ENCODE measurements at regions of chr2 and their contacts with region 1.

Region 1: GRCh38 chr2:25362049-25362433 is 20.3 kb upstream of the DNMT3A start:
- DNase-seq: peak; percentile 96
- ATAC-seq: peak; percentile 98
- H3K4me3 Mint-ChIP-seq: peak overlapping the region; percentile 83
- H3K27ac Mint-ChIP-seq: peak overlapping the region; percentile 93
- H3K4me1 Mint-ChIP-seq: peaks cover 15% of the 10 kb centered on the region
- H3K27me3 Mint-ChIP-seq: no peaks in the 10 kb centered on the region

Region 2: GRCh38 chr2:25276569-25277465 is 85.2 kb before region 1 on chr2:
- CTCF ChIA-PET with region 1: interaction called, 18 read pairs
- DNase-seq: peak; percentile 84
- ATAC-seq: peak; percentile 79
- H3K4me3 Mint-ChIP-seq: peak overlapping the region; percentile 65
- H3K27ac Mint-ChIP-seq: peak overlapping the region; percentile 92
- H3K4me1 Mint-ChIP-seq: peaks cover 70% of the 10 kb centered on the region
- H3K27me3 Mint-ChIP-seq: no peaks in the 10 kb centered on the region

Region 3: GRCh38 chr2:25301453-25302352 is 60.3 kb before region 1 on chr2:
- CTCF ChIA-PET with region 1: interaction called, 22 read pairs
- DNase-seq: peak; percentile 96
- ATAC-seq: peak; percentile 95
- H3K4me3 Mint-ChIP-seq: peak overlapping the region; percentile 10
- H3K27ac Mint-ChIP-seq: peak overlapping the region; percentile 70
- H3K4me1 Mint-ChIP-seq: peaks cover 63% of the 10 kb centered on the region
- H3K27me3 Mint-ChIP-seq: no peaks in the 10 kb centered on the region

Region 4: DNA sequence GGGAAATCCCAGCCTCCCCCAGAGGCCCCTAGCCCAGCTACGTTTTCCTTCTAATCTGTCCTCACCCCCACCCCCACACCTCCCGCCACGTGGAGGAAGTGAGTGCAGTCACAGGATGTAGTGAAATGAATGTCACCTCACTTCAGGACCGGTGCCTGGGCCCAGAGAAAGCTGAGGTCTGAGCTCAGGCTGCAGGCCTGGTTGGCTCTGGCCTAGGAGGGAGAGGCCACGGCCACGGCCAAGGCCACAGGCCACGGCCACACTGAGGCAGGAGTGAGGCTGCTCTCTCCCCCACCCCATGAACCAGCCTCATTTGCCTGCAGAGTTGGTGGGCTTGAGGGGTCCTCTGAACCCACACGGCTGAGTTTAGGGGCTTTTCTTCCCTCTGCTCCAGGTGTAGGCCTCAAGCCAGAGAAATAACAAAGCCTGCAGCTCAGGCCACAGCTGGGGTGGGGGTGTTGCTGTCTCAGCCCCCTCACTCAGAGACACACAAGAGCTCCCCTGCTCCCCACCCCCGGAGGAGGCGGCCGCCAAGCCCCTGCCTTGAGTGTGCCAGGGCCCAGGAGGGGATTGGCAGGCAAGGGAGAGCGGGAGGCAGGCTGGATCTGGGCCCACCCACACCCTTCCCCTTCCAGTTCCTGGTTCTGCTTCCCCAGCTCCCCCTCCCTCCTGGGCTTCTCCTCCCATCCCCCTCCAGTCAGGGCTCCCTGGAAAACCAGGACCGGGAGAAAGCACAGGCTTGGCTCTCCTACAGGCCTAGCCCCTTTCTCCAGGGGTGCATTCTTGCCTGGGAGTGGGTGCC is 47.3 kb before region 1 on chr2:
- CTCF ChIA-PET with region 1: interaction called, 16 read pairs
- DNase-seq: peak; percentile 93
- ATAC-seq: peak; percentile 92
- H3K4me3 Mint-ChIP-seq: peak overlapping the region; percentile 76
- H3K27ac Mint-ChIP-seq: peak overlapping the region; percentile 92
- H3K4me1 Mint-ChIP-seq: peaks cover 60% of the 10 kb centered on the region
- H3K27me3 Mint-ChIP-seq: no peaks in the 10 kb centered on the region

Region 5: DNA sequence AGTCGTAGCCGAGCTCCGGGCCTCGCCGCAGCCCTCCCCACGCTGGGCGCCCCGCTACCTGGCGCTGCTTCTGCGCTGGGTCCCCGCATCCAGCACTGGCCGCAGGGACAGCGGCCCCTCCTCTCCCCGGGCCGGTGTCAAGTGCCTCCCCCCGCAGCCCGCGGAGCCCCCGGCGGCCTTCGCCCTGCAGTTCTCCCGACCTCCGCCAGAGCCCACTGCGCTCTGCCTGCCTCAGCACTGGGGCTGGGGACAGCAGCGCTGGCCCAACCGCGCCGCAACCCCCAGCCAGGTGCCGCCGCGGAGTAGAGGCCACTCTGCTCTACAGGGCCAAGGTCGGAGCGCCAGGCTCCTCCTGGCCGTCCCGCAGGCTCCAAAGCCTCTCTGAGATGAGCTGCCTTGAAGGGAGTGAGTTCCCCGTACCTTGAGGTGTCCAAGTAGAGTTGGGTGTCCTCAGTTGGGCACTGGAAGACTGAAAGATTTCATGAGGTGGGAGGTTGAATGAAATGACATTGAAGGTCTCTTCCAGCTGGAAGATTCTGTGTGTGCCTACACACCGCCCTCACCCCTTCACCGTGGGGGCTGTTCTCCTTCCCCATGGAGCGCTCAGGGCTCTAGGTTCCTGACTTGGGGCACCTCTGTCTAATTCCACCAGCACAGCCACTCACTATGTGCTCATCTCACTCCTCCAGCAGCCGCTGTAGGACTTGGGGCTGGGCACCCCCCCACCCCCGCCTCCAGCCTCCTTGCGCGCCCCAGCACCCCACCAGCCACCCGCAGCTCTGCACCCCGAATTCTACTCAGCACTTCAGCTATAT is 19.5 kb before region 1 on chr2:
- CTCF ChIA-PET with region 1: interaction called, 23 read pairs
- DNase-seq: peak; percentile 89
- ATAC-seq: peak; percentile 91
- H3K4me3 Mint-ChIP-seq: peak overlapping the region; percentile 71
- H3K27ac Mint-ChIP-seq: peak overlapping the region; percentile 69
- H3K4me1 Mint-ChIP-seq: peaks cover 30% of the 10 kb centered on the region
- H3K27me3 Mint-ChIP-seq: no peaks in the 10 kb centered on the region

Region 6: GRCh38 chr2:25402477-25402876 is 40.4 kb after region 1 on chr2:
- CTCF ChIA-PET with region 1: interaction called, 12 read pairs
- DNase-seq: peak; percentile 73
- ATAC-seq: peak; percentile 65
- H3K4me3 Mint-ChIP-seq: peak overlapping the region; percentile 14
- H3K27ac Mint-ChIP-seq: peak overlapping the region; percentile 82
- H3K4me1 Mint-ChIP-seq: peaks cover 33% of the 10 kb centered on the region
- H3K27me3 Mint-ChIP-seq: no peaks in the 10 kb centered on the region

Region 7: DNA sequence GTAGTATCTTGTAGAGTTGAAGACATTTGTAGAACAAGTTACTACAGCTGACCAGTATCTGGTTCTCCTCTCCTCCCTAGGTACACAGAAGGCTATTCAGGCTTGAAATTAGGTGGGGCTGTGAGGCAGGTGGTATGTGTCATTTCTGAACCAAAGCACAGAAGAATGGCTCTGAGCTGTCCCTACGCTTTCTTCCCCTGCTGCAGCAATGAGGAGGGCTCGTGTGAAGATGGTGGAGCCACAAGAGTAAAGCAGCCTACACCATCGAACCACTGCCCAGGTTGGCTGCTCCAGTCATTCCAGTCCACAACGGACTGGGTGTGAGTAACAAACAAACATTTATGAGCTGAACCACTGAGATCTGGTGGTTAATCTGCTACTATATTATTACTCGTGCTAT is 162.5 kb after region 1 on chr2:
- CTCF ChIA-PET with region 1: interaction called, 12 read pairs
- DNase-seq: peak; percentile 47
- ATAC-seq: no peak
- H3K4me3 Mint-ChIP-seq: no peak overlapping the region
- H3K27ac Mint-ChIP-seq: no peak overlapping the region
- H3K4me1 Mint-ChIP-seq: peaks cover 20% of the 10 kb centered on the region
- H3K27me3 Mint-ChIP-seq: no peaks in the 10 kb centered on the region

Measured in activated CD8-positive, alpha-beta memory T cell treated with anti-CD3 and anti-CD28 coated beads, Interleukin-2, amount 10 ng/mL, durations not matched to agents 7 days and 5 days (primary cell).